Spleen (tissue), 13 donors: ENCODE measurements at regions of chrX and their contacts with region 1.

Region 1: GRCh38 chrX:85111347-85111746 is 107.7 kb downstream of the APOOL start:
- DNase-seq: no peak
- H3K4me3 ChIP-seq: no peak overlapping the region
- H3K27ac ChIP-seq: no peak overlapping the region
- H3K4me1 ChIP-seq: no peaks in the 10 kb centered on the region
- H3K27me3 ChIP-seq: peaks cover 0 to 10% (median 0%) of the 10 kb centered on the region in 7 donors
- CTCF ChIP-seq: peak in 8 of 11 experiments; percentile 12 to 62 (median 30)
- POLR2A ChIP-seq: no peak

Region 2: DNA sequence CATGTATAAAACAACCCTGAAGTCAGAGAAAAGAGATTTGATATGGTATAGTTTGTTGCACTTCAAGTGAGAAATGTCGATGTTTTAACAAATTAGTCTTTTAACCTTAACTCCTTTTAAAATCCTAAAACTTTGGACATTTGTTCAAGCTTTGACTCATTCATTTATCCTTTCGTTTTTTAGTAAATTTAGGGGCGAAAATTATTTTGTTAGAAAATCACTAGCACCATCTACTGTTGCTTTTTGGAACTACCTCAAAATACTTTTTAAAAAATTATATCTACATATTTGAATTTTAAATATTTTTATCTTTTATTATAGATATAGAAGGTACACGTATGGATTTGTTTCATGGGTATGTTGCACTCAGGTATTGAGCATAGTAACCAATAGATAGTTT is 433.3 kb after region 1 on chrX:
- intact Hi-C with region 1: loop called (anchors 5 kb)
- DNase-seq: no peak
- H3K4me3 ChIP-seq: no peak overlapping the region
- H3K27ac ChIP-seq: no peak overlapping the region
- H3K4me1 ChIP-seq: no peaks in the 10 kb centered on the region
- H3K27me3 ChIP-seq: no peaks in the 10 kb centered on the region
- CTCF ChIP-seq: peak in 5 of 11 experiments; percentile 17 to 47 (median 31)
- POLR2A ChIP-seq: no peak